ENCODE measurements at regions of chr14 and their contacts with region 1.

Region 1: DNA sequence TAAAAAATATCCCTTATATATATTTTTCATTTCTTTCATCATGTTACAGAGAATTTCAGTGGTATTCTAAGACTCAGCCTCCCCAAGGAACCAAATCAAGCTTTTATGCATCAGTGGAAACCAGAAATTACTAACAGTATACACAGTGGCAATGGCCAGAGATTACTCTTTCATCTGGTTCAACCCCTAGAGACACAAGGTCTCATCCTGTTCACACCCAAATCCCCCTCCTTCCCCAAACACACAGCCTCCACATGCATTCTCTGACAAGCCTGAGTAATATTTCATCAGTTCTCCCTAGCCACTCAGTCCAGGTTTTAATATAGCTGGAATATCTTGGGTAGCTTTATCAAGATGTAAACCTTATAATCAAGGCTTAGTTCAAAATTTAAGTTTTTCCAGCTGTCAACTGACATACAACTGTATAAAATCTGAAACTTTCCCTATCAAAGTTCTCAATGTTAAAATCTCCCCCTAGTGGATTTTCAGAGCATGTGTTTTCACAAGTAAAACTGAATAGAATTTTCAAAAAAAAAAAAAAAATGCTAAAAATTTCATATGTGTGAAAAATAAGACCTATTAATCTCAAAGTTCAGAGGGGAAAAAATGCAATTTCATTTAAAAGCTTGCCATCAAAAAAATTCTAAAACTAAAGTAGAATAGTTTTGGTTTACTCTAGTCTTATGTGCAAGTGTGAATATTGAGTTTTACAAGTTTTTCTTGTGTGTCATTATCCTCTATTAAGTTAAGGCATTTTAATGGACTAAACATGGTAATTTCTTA is 10.5 kb upstream of the SSTR1 start:
- DNase-seq: no peak
- H3K4me3 ChIP-seq: no peak overlapping the region
- H3K27ac ChIP-seq: no peak overlapping the region
- H3K4me1 ChIP-seq: peaks cover 0 to 2% (median 0%) of the 10 kb centered on the region in 4 donors
- H3K27me3 ChIP-seq: no peaks in the 10 kb centered on the region
- CTCF ChIP-seq: peak; percentile 42 to 55

Region 2: DNA sequence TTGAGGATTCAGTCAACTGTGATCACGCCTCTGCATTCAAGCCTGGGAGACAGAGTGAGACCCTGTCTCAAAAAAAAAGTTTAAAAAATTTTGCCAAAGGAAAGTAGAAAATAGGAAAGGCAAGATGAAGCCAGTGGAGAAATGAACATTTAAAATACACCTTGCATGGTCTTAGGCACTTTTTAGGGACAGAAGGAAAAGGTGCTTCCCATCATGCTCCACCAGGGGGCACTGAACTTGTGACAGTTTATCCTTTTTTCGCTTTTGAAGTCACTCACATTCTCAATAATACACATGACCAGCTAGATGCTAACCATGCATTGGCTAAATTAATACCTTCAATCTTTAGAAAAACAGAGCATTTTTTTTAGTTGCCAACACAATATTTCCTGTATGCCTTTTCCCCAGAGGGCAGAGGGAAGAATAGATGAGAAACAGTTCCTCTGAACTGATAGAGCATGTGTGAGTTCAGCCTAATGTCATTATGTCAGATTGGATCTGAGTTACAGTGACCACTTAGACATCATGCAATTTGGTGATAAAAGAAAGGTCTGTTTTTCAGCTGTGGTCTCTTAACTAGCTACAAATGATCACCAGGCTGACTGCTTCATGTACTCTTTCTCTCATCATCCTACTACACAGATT is 211.2 kb before region 1 on chr14:
- intact Hi-C with region 1: loop called (anchors 5 kb)
- DNase-seq: no peak
- H3K4me3 ChIP-seq: no peak overlapping the region
- H3K27ac ChIP-seq: no peak overlapping the region
- H3K4me1 ChIP-seq: no peaks in the 10 kb centered on the region
- H3K27me3 ChIP-seq: no peaks in the 10 kb centered on the region
- CTCF ChIP-seq: peak; percentile 67 to 69

Region 3: GRCh38 chr14:38089123-38089522 is 108.1 kb before region 1 on chr14:
- intact Hi-C with region 1: no loop called
- DNase-seq: no peak
- H3K4me3 ChIP-seq: no peak overlapping the region
- H3K27ac ChIP-seq: no peak overlapping the region
- H3K4me1 ChIP-seq: peaks cover 0 to 17% (median 0%) of the 10 kb centered on the region in 4 donors
- H3K27me3 ChIP-seq: no peaks in the 10 kb centered on the region
- CTCF ChIP-seq: no peak

Region 4: GRCh38 chr14:38309522-38310277 is 112.5 kb after region 1 on chr14:
- intact Hi-C with region 1: no loop called
- DNase-seq: no peak
- H3K4me3 ChIP-seq: no peak overlapping the region
- H3K27ac ChIP-seq: no peak overlapping the region
- H3K4me1 ChIP-seq: peaks cover 0 to 12% (median 0%) of the 10 kb centered on the region in 4 donors
- H3K27me3 ChIP-seq: no peaks in the 10 kb centered on the region
- CTCF ChIP-seq: no peak

Measured in tibial artery (tissue), 4 donors.